A549 (cell line): ENCODE measurements at regions of chr12 and their contacts with region 1.

Region 1: GRCh38 chr12:89019408-89020120 is 332.7 kb downstream of the DUSP6 start:
- DNase-seq: peak; percentile 57 to 88
- ATAC-seq: peak; percentile 98 to 99
- H3K4me3 ChIP-seq: peak overlapping the region; percentile 43
- H3K27ac ChIP-seq: peak overlapping the region; percentile 36 to 66; a peak in 5 of 6 replicates
- H3K4me1 ChIP-seq: peaks cover 10% of the 10 kb centered on the region; the same call in 2 of the 3 replicates
- CTCF ChIP-seq: peak; percentile 92
- EP300 ChIP-seq: no peak
- POLR2A ChIP-seq: no peak
- RAD21 ChIP-seq: peak; percentile 92 to 95

Region 2: GRCh38 chr12:88922816-88923215 is 96.7 kb before region 1 on chr12:
- CTCF ChIA-PET with region 1: no interaction called
- POLR2A ChIA-PET with region 1: no interaction called
- DNase-seq: no peak
- ATAC-seq: no peak
- H3K4me3 ChIP-seq: no peak overlapping the region
- H3K27ac ChIP-seq: no peak overlapping the region
- H3K4me1 ChIP-seq: peaks cover 35% of the 10 kb centered on the region
- CTCF ChIP-seq: no peak
- EP300 ChIP-seq: no peak
- POLR2A ChIP-seq: no peak
- RAD21 ChIP-seq: no peak

Region 3: DNA sequence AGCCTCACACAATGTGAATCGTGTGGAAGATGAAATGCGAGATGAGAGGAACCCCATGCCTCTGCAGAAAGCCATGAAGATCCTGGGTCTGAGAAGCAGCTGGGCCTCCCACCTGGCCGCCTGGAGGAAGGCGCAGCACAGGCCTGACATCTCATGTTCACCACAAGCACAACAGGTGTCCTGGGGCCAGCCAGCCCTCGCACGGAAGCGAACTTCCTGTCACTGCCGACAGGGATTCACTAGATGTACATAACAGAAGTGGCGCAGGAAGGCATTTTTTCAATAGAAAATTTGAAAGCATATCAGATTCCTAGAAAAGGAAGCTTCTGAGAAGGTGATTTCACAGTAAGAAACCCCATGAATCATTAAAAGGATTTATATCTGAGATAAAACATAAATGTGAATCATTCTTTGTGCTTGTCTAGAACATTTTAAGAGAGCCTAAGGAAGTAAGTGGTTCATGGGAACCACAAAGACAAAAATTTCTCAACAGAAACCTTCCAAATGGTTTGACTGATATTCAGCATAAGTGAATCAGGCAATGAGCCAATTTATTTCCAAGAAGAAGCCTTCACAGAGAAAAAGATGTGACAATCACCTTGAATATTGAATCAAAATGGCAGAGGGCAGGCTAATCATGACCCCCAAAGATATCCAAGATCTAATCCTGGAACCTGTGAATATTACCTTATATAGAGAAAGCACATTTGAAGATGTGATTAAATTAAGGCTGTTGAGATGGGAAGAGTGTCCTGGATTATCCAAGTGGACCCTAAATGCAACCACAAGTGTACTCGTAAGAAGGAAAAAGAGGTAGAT is 20.8 kb after region 1 on chr12:
- CTCF ChIA-PET with region 1: interaction called, 17 read pairs
- POLR2A ChIA-PET with region 1: no interaction called
- DNase-seq: no peak
- ATAC-seq: no peak
- H3K4me3 ChIP-seq: no peak overlapping the region
- H3K27ac ChIP-seq: no peak overlapping the region
- H3K4me1 ChIP-seq: no peaks in the 10 kb centered on the region
- CTCF ChIP-seq: no peak
- EP300 ChIP-seq: no peak
- POLR2A ChIP-seq: no peak
- RAD21 ChIP-seq: no peak

Region 4: DNA sequence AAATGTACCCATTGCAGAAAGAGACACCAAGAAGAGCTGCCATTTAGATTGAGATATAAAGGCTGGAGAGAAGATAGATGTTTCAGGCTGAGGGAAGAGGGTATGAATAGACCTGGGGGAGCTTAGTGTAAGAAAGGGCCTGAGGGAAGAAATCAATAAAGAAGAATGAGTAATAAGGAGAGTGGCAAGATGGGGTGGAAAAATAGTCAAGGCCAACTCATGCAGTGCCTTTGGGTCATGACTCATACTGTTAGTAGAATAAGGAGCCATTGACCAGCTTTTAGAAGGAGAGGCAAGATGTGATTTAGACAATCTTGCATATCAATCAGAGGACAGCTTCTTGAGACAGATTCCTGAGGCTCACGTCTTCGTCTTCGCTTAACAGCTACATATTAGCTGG is 45.2 kb after region 1 on chr12:
- CTCF ChIA-PET with region 1: interaction called, 15 read pairs
- POLR2A ChIA-PET with region 1: no interaction called
- DNase-seq: peak in 1 of 2 experiments; percentile 6
- ATAC-seq: no peak
- H3K4me3 ChIP-seq: no peak overlapping the region
- H3K27ac ChIP-seq: no peak overlapping the region
- H3K4me1 ChIP-seq: no peaks in the 10 kb centered on the region
- CTCF ChIP-seq: no peak
- EP300 ChIP-seq: no peak
- POLR2A ChIP-seq: no peak
- RAD21 ChIP-seq: no peak

Region 5: GRCh38 chr12:89414851-89415250 is 395.3 kb after region 1 on chr12:
- CTCF ChIA-PET with region 1: no interaction called
- POLR2A ChIA-PET with region 1: no interaction called
- DNase-seq: no peak
- ATAC-seq: no peak
- H3K4me3 ChIP-seq: no peak overlapping the region
- H3K27ac ChIP-seq: no peak overlapping the region
- H3K4me1 ChIP-seq: peaks cover 15% of the 10 kb centered on the region
- CTCF ChIP-seq: no peak
- EP300 ChIP-seq: no peak
- POLR2A ChIP-seq: no peak
- RAD21 ChIP-seq: no peak

Region 6: DNA sequence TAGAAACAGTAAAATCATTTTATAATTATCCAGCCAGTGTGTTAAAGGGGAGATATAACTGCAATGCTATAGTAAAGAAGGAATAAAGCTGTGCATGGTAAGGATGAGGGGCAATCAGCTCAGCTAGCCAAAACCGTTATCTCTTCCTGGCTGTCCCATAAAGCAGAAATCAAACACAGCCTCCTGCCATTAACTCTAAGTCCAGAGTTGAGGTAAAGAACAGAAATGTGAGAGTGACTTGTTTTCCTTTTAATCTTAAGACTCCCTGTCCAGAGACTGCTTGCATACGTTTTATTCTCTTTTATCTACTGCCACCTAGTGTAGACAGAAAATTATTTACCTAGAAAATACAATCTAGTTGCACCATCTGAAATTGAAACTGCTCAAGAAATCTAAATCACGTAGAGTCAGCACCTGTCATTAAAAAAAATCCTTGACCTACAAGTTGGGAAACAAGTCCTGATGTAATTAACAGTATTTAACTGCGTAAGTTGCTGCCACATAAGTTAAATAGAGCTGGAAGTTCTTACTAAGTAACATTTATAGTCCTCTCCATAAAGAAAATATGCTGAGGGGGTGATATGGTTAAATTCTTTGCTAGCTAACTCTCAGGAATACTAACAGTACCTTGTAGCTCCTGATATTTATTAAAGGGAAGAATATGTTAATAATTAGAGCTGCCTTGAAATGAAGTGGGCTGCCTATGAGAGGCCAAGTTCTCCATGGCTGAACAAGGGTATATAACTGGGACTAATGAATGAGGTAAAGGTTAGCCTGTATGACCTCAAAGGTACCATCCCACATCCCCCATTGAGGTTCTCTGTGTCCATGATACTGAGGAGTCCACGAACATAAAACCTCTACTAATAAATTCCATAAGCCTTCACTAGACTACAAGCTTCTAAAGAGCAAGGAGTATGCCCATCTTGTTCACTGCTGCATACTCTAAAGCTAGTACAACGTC is 442.4 kb after region 1 on chr12:
- CTCF ChIA-PET with region 1: interaction called, 81 read pairs
- POLR2A ChIA-PET with region 1: no interaction called
- DNase-seq: peak; percentile 51 to 64
- ATAC-seq: peak; percentile 91 to 95
- H3K4me3 ChIP-seq: no peak overlapping the region
- H3K27ac ChIP-seq: no peak overlapping the region
- H3K4me1 ChIP-seq: no peaks in the 10 kb centered on the region
- CTCF ChIP-seq: peak; percentile 86
- EP300 ChIP-seq: no peak
- POLR2A ChIP-seq: no peak
- RAD21 ChIP-seq: peak; percentile 88 to 91

Region 7: GRCh38 chr12:89524541-89525285 is 505.1 kb after region 1 on chr12 and contains the start of gene GALNT4:
- CTCF ChIA-PET with region 1: interaction called, 23 read pairs
- POLR2A ChIA-PET with region 1: no interaction called
- DNase-seq: peak; percentile 90 to 95
- ATAC-seq: peak; percentile 88 to 93
- H3K4me3 ChIP-seq: peak within 1 kb of the TSS; percentile 75
- H3K27ac ChIP-seq: peak within 1 kb of the TSS; percentile 93 to 96
- H3K4me1 ChIP-seq: peaks cover 48% of the 10 kb centered on the region
- CTCF ChIP-seq: peak; percentile 62
- EP300 ChIP-seq: no peak
- POLR2A ChIP-seq: peak; percentile 51
- RAD21 ChIP-seq: peak; percentile 55 to 68
- polyA plus RNA-seq, gene GALNT4: 12.6 and 14.3 TPM in 2 replicates